ENCODE measurements at regions of chr9 and their contacts with region 1.

Region 1: GRCh38 chr9:112097712-112098688 is 77.1 kb downstream of the SUSD1 start:
- DNase-seq: no peak
- H3K4me3 ChIP-seq: no peak overlapping the region
- H3K27me3 ChIP-seq: no peaks in the 10 kb centered on the region
- CTCF ChIP-seq: peak; percentile 90

Region 2: GRCh38 chr9:111759762-111760639 is 338.0 kb before region 1 on chr9:
- CTCF ChIA-PET with region 1: interaction called, 12 read pairs
- POLR2A ChIA-PET with region 1: no interaction called
- DNase-seq: peak; percentile 63
- H3K4me3 ChIP-seq: no peak overlapping the region
- H3K27me3 ChIP-seq: no peaks in the 10 kb centered on the region
- CTCF ChIP-seq: peak; percentile 59

Region 3: GRCh38 chr9:111896353-111896958 is 201.5 kb before region 1 on chr9 and contains the start of gene UGCG:
- CTCF ChIA-PET with region 1: no interaction called
- POLR2A ChIA-PET with region 1: no interaction called
- DNase-seq: peak; percentile 48
- H3K4me3 ChIP-seq: peak within 1 kb of the TSS; percentile 97
- H3K27me3 ChIP-seq: no peaks in the 10 kb centered on the region
- CTCF ChIP-seq: no peak
- polyA plus RNA-seq, gene UGCG: 34.3 and 79.4 TPM in 2 replicates

Region 4: DNA sequence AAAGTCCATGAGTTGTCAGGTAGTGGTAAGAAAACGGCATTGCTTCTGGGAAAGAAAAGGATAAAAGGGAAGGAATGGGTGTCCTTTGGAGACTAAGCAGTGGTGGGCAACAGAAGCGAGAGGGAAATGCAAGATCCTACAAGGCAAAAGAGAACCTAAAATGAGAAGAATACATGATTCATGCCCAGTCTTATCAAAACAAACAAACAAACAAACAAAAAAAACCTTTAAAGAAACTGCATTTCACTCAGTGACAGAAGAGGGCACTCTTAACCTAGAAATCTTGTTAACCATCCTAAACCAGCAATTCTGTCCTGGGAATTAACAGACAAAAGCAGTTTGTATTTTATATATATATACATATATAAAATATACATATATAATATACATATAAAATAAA is 11.4 kb before region 1 on chr9:
- CTCF ChIA-PET with region 1: interaction called, 20 read pairs
- POLR2A ChIA-PET with region 1: no interaction called
- DNase-seq: no peak
- H3K4me3 ChIP-seq: no peak overlapping the region
- H3K27me3 ChIP-seq: no peaks in the 10 kb centered on the region
- CTCF ChIP-seq: peak; percentile 52

Region 5: DNA sequence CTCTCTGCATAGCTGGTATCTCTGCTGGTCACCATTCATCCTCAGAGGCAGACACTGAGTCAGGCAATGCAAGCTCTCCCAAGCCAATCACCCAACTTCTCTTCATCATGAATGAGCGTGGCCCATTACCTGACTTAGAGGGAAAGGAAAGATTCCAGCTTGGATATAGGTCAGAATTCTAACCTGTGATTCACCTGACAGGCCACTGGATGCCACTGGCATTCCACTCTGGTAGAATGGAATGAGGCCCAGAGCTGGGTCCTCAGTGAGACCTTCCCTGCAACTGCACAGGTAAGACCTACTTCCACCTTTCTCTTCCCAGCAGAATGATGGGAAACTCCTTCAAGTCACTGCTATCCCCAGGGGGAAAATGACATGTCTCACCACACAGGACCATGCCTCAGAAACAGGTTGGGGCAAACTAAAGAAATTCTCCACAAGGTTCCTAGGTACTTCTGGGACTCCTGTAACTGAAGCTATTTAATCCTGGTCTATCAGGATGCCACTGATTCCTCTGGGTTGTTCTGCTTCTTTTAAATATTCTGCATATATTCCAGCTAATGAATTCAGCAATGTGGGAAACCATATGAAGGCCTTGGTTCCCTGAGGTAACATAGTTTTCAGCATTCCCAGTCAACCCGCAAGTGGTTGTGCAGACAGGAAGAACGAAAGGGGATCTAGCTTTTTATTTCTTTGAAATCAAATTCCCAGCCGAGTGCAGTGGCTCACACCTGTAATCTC is 15.1 kb after region 1 on chr9:
- CTCF ChIA-PET with region 1: interaction called, 30 read pairs
- POLR2A ChIA-PET with region 1: no interaction called
- DNase-seq: no peak
- H3K4me3 ChIP-seq: no peak overlapping the region
- H3K27me3 ChIP-seq: no peaks in the 10 kb centered on the region
- CTCF ChIP-seq: peak; percentile 26

Region 6: DNA sequence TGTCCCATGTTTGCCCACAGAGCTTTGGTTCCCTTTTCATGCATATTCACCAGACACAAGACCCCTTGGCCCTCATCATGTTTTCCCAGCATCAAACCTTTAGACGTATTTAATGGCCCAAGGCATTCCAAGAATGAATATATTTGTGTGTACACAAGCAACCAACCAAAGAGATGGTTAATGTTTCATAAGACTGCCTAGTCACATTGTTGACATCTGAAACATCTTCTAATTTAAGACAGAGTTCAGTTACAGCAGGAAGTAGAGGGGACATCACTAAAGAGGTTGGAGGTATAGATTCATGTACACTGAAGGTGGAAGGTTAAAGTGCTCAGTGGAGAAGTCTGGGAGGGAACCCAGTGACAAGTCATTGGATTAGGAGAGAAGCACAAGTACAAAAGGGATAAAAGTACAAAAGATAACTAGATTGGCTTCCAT is 28.0 kb after region 1 on chr9:
- CTCF ChIA-PET with region 1: no interaction called
- POLR2A ChIA-PET with region 1: no interaction called
- DNase-seq: no peak
- H3K4me3 ChIP-seq: no peak overlapping the region
- H3K27me3 ChIP-seq: no peaks in the 10 kb centered on the region
- CTCF ChIP-seq: no peak

Region 7: GRCh38 chr9:112245126-112245525 is 147.1 kb after region 1 on chr9:
- CTCF ChIA-PET with region 1: no interaction called
- POLR2A ChIA-PET with region 1: no interaction called
- DNase-seq: no peak
- H3K4me3 ChIP-seq: no peak overlapping the region
- H3K27me3 ChIP-seq: no peaks in the 10 kb centered on the region
- CTCF ChIP-seq: no peak

Measured in BJ (cell line).